Dorsolateral prefrontal cortex (tissue), 120 donors: ENCODE measurements at regions of chr1 and their contacts with region 1.

Region 1: GRCh38 chr1:241640029-241640818 is at the starts of genes CHML and OPN3:
- DNase-seq: peak; percentile 83 to 97 (median 91)
- H3K4me3 ChIP-seq: peak within 1 kb of the TSS; percentile 64 to 98 (median 89)
- H3K27ac ChIP-seq: peak within 1 kb of the TSS; percentile 25 to 93 (median 85)
- H3K27me3 ChIP-seq: no peaks in the 10 kb centered on the region
- CTCF ChIP-seq: peak in 16 of 56 donors; percentile 7 to 51 (median 19)
- total RNA-seq, gene CHML: 8.5 to 41.5 (median 19.6) TPM
- total RNA-seq, gene OPN3: 10.6 to 48.1 (median 29.5) TPM

Region 2: DNA sequence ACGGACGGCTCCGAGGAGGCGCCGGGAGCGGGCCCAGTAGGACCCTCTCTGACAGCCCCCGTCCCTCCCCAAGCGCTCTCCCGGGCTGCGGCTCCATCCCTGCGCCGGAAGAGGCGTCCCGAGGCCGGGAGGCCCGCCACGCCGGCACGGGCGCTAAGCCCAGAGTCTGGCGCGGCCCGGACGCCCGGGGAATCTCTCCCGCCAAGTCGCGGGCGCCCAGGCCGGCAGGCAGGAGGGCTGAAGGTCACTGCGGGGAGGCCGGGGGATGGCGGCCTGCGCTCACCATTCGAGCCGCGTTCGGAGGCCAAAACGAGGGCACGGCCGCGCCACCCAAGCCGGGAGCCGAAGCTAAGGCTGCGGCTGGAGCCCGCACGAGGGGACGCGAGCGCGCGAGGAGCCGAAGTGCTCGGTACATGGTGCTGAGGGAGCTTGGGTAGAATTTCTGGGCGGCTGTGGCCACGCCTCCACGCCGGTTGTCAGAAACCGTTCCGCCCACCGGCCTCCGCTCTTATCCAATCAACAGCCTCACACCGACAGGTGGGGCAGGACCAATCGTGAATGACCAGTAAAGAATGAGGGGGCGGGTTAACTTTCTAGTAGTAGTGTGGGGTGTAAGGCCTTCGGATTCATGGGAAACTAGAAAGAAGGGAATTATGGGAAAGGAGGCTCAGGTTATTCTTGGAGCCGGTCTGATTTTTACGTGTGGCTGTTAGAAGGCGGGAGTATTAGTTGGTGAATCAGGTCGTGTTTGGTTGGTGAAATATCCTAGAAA is 120.7 kb before region 1 on chr1 and contains the start of gene FH:
- intact Hi-C with region 1: loop called (anchors 5 kb)
- DNase-seq: peak; percentile 89 to 99 (median 98)
- H3K4me3 ChIP-seq: peak within 1 kb of the TSS; percentile 63 to 100 (median 89)
- H3K27ac ChIP-seq: peak within 1 kb of the TSS; percentile 4 to 92 (median 84)
- H3K27me3 ChIP-seq: no peaks in the 10 kb centered on the region
- CTCF ChIP-seq: peak in 39 of 56 donors; percentile 6 to 67 (median 35)
- total RNA-seq, gene FH: 31.3 to 78.1 (median 59.0) TPM

Region 3: GRCh38 chr1:241782396-241782795 is 142.2 kb after region 1 on chr1:
- intact Hi-C with region 1: loop called in 1 of 2 experiments (anchors 10 kb)
- DNase-seq: no peak
- H3K4me3 ChIP-seq: no peak overlapping the region
- H3K27ac ChIP-seq: no peak overlapping the region
- H3K27me3 ChIP-seq: peaks cover 0 to 2% (median 0%) of the 10 kb centered on the region in 45 donors
- CTCF ChIP-seq: no peak